ENCODE measurements at regions of chr4 and their contacts with region 1.

Region 1: DNA sequence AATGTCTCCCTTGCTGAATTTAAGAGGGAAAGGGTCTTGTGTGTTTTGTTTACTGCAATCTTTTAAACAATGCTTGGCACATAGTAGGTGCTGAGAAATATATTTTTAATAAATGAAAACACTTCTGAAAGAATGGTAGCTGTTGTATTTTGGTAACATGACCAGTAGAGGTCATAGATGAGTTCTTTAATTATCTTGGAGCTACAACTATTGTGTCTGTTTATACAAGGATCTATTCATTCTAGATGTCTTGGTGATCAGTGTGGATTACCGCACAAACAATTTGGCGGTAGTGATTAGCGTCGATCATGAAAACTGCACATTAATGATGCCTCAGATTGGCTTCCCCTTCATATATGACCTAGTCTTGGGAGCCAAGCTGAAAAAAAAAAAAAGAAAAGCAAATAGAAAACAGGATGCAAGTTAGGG is 21.4 kb upstream of the SCRG1 start:
- H3K4me3 Mint-ChIP-seq: no peak overlapping the region
- H3K27ac Mint-ChIP-seq: no peak overlapping the region
- H3K4me1 Mint-ChIP-seq: peaks cover 35% of the 10 kb centered on the region
- H3K27me3 Mint-ChIP-seq: no peaks in the 10 kb centered on the region

Region 2: DNA sequence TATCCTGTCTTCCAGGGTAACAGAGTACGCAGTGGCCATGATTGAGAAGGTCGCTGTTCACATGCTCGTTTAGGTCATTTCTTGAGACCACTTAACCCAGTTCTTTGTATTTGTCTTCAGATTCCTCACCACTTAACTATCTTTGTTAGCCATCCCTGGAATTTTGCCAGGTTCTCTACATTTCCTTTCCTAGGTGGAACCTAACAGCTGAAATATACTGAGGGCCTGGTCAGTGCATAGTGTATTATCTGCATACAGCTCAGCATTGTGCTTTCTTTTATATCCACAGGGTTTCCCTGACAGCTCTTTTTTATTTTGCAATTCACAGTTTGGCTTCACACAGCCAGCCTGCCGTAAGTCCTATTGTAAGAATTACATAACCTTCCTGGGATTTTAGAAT is 400.6 kb before region 1 on chr4:
- intact Hi-C with region 1: loop called (anchors 5 kb)
- H3K4me3 Mint-ChIP-seq: no peak overlapping the region
- H3K27ac Mint-ChIP-seq: no peak overlapping the region
- H3K4me1 Mint-ChIP-seq: no peaks in the 10 kb centered on the region
- H3K27me3 Mint-ChIP-seq: no peaks in the 10 kb centered on the region

Region 3: GRCh38 chr4:173318648-173319211 is 101.6 kb before region 1 on chr4:
- intact Hi-C with region 1: loop called (anchors 1 kb)
- H3K4me3 Mint-ChIP-seq: no peak overlapping the region
- H3K27ac Mint-ChIP-seq: no peak overlapping the region
- H3K4me1 Mint-ChIP-seq: peaks cover 10% of the 10 kb centered on the region
- H3K27me3 Mint-ChIP-seq: no peaks in the 10 kb centered on the region

Region 4: GRCh38 chr4:173370477-173371291 is 49.7 kb before region 1 on chr4 and contains the start of gene SAP30:
- intact Hi-C with region 1: loop called (anchors 1 kb)
- H3K4me3 Mint-ChIP-seq: peak within 1 kb of the TSS; percentile 100
- H3K27ac Mint-ChIP-seq: peak within 1 kb of the TSS; percentile 96
- H3K4me1 Mint-ChIP-seq: peaks cover 16% of the 10 kb centered on the region
- H3K27me3 Mint-ChIP-seq: no peaks in the 10 kb centered on the region

Region 5: GRCh38 chr4:173494013-173494970 is 74.0 kb after region 1 on chr4:
- intact Hi-C with region 1: loop called (anchors 2 kb)
- H3K4me3 Mint-ChIP-seq: peak overlapping the region; percentile 71
- H3K27ac Mint-ChIP-seq: no peak overlapping the region
- H3K4me1 Mint-ChIP-seq: peaks cover 25% of the 10 kb centered on the region
- H3K27me3 Mint-ChIP-seq: peaks cover 30% of the 10 kb centered on the region

Region 6: GRCh38 chr4:173752610-173753230 is 332.4 kb after region 1 on chr4:
- intact Hi-C with region 1: loop called (anchors 5 kb)
- H3K4me3 Mint-ChIP-seq: no peak overlapping the region
- H3K27ac Mint-ChIP-seq: no peak overlapping the region
- H3K4me1 Mint-ChIP-seq: no peaks in the 10 kb centered on the region
- H3K27me3 Mint-ChIP-seq: no peaks in the 10 kb centered on the region

Measured in dendritic cell treated with granulocyte-macrophage colony-stimulating factor and Interleukin-4, amounts not matched to agents 40 ng/mL and 50 ng/mL, for 4 days (primary cell).